PC-3 (cell line): ENCODE measurements at regions of chr11 and their contacts with region 1.

Region 1: GRCh38 chr11:86291466-86292262 is 10.4 kb upstream of the HIKESHI start:
- DNase-seq: peak; percentile 79
- ATAC-seq: peak; percentile 45
- H3K4me3 ChIP-seq: no peak overlapping the region
- H3K27ac ChIP-seq: no peak overlapping the region
- H3K4me1 ChIP-seq: no peaks in the 10 kb centered on the region
- H3K27me3 ChIP-seq: no peaks in the 10 kb centered on the region
- CTCF ChIP-seq: peak; percentile 75

Region 2: DNA sequence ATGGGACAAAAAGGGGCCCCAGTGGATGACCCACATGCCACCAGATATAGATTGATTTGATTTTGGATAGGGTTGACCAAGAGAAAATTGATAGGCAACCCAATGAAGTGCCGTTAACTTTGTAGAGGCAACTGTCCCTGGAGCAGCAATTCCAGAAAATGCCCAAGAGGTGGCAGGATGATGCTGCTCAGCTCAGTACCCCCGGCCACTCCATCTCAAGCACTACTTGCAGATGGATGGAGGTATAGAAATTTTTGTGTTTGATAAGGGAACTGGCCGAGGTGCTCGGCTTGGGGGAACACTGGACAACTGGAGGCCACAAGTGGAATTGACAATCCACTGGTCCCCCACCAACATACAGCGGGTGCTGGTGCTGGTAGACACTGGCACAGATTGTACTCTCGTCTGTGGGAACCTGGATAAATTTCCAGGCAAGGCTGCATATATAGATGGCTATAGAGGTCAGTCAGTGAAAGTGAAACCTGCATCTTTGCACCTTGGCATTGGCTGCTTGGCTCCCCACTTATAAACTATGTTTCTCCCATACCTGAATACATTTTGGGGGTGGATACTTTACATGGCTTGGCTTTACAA is 350.2 kb before region 1 on chr11:
- CTCF ChIA-PET with region 1: no interaction called
- POLR2A ChIA-PET with region 1: no interaction called
- intact Hi-C with region 1: loop called (anchors 5 kb)
- DNase-seq: peak; percentile 59
- ATAC-seq: peak; percentile 64
- H3K4me3 ChIP-seq: no peak overlapping the region
- H3K27ac ChIP-seq: no peak overlapping the region
- H3K4me1 ChIP-seq: no peaks in the 10 kb centered on the region
- H3K27me3 ChIP-seq: no peaks in the 10 kb centered on the region
- CTCF ChIP-seq: peak; percentile 63

Region 3: GRCh38 chr11:86041975-86042378 is 249.7 kb before region 1 on chr11:
- CTCF ChIA-PET with region 1: no interaction called
- POLR2A ChIA-PET with region 1: no interaction called
- intact Hi-C with region 1: loop called (anchors 2 kb)
- DNase-seq: peak; percentile 92
- ATAC-seq: peak; percentile 64
- H3K4me3 ChIP-seq: no peak overlapping the region
- H3K27ac ChIP-seq: no peak overlapping the region
- H3K4me1 ChIP-seq: peaks cover 3% of the 10 kb centered on the region; the same call in 1 of the 2 replicates
- H3K27me3 ChIP-seq: no peaks in the 10 kb centered on the region
- CTCF ChIP-seq: peak; percentile 82

Region 4: DNA sequence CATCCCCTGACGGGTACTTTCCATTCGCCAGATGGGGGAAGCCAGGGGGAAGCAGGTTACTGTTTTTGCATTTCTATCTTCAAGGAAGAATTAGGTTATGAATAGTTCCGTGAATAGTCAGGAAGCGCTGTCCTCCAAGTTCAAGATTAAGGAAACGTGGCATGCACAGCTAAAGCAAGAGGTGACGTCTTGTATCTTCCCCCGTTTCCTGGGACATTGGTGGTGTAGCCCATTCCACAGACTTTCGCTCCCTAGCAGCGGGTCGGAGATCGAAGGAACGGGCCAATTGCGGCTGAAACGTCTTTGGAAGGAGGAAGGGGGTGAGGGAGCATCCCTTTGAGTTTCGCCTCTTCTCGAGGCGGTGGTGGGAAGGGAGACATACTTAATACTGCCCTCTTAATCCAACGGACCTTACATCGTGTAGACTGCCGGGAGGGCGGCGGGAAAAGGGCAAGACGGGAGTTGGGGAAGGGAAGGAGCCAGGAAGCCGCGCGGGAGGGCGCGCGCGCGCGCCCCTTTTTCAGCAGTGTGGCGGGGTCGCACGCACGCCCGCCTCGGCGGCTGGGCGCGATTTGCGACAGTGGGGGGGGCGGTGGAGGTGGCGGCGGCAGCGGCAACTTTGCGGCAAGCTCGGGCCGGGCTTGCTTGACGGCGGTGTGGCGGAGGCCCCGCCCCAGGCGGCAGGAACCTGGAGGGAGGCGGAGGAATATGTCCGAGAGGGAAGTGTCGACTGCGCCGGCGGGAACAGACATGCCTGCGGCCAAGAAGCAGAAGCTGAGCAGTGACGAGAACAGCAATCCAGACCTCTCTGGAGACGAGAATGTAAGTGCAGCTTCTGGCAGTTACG is 46.9 kb before region 1 on chr11 and contains the start of gene EED:
- CTCF ChIA-PET with region 1: no interaction called
- POLR2A ChIA-PET with region 1: no interaction called
- intact Hi-C with region 1: loop called (anchors 1 kb)
- DNase-seq: peak; percentile 88
- ATAC-seq: peak; percentile 79
- H3K4me3 ChIP-seq: peak within 1 kb of the TSS; percentile 85
- H3K27ac ChIP-seq: peak within 1 kb of the TSS; percentile 95
- H3K4me1 ChIP-seq: peaks cover 25% of the 10 kb centered on the region
- H3K27me3 ChIP-seq: no peaks in the 10 kb centered on the region
- CTCF ChIP-seq: no peak
- total RNA-seq, gene EED: 17.6 and 19.4 TPM in 2 replicates